Posterior vena cava (tissue), 2 donors: ENCODE measurements at regions of chr16 and their contacts with region 1.

Region 1: DNA sequence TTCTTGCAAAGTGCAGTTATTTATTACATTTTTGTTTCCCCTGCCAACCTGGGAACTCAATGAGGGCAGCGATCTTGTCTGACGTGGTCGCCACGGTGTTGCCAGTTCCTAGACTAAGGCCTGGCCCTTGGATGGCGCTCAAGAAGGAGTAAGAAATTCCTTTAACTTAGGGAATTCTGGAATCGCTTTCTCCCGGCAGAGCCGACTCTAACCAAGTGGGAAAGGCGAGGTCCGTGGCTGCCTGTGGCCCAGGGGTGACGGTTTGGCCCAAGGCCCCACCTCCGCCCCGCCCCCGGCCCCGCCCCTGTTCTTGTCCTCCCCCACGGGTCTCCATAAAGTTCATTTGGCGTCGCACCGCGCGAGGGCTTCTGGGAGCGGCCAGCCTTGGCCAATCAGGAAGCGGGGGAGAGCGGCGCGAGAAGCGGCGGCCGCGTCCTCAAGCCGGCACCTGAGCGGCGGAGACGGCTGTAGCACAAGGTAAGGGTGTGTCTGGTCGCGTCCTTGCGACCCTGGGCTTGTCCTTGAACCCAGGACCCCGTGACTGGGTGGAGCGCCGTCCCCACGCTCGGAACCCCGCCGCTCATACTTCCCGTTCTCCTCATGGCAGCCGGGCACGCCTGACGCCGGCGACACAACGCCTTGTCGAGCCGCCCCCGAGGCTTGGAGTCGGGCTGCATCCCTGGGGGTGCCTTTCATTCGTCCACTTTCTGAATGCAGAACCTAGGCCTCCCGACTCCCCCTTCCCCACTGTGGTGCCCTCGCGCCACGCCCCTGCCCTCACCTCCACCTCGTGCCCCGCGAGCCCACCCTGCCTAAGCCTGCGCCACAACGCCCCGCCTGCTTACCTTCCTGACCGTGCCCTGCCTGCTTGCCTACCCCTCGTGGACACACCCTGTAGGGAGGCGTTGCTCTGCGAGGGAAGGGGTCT is at the start of gene NUP93:
- DNase-seq: peak; percentile 98
- total RNA-seq, gene NUP93: 42.8 to 54.7 TPM

Region 2: DNA sequence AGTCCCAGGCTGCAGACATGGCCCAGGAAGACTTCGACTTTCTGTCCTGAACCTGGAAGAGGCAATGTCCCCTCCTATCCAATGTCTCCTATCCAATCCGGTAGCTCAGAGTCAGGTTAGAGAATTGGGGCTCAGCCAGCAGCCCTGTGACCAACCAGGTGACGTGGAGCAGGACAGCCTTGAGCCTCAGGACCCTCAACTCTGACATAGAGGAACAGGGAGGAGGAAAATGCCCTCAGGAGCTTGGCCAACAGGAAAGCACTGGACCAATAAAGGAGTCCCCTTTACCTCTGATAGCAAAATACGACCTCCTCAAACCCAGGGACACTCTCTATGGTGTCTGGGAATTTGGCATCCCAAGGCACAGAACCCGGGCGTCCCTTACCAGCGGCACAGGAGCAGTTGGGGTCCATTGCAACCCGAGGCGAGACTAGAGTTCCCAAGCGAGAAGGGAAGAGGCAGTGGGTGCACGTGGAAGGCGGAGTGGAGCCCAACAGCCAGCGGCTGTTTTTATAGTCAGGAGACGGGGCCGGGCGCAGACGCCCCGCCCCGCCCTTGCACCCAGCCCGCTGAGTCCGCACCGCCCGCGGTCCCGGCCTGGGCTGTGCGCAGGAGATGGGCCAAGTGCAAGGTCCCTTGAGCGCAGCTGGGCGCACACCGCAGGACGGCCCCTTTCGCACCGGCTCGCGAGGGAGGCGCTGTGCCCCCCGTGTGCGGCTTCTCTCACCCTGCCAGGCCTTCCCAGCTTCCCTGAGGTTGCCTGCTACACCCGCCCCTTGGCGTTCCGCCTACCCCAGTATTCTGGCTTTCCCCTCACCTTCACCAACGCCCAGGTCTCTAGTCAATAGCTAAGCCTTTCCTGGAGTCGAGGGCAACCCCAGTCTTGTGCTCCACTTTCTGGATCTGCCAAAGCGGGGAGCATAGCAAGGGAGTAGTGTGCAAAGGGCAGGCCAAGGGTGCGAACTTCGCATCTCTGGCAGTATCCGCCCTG is 62.1 kb before region 1 on chr16 and contains the start of gene MT1G:
- intact Hi-C with region 1: loop called in 1 of 2 experiments (anchors 10 kb)
- DNase-seq: peak; percentile 92
- total RNA-seq, gene MT1G: 14.0 to 26.7 TPM

Region 3: GRCh38 chr16:56753410-56753809 is 23.4 kb after region 1 on chr16:
- intact Hi-C with region 1: loop called in 1 of 2 experiments (anchors 2 kb)
- DNase-seq: no peak

Region 4: DNA sequence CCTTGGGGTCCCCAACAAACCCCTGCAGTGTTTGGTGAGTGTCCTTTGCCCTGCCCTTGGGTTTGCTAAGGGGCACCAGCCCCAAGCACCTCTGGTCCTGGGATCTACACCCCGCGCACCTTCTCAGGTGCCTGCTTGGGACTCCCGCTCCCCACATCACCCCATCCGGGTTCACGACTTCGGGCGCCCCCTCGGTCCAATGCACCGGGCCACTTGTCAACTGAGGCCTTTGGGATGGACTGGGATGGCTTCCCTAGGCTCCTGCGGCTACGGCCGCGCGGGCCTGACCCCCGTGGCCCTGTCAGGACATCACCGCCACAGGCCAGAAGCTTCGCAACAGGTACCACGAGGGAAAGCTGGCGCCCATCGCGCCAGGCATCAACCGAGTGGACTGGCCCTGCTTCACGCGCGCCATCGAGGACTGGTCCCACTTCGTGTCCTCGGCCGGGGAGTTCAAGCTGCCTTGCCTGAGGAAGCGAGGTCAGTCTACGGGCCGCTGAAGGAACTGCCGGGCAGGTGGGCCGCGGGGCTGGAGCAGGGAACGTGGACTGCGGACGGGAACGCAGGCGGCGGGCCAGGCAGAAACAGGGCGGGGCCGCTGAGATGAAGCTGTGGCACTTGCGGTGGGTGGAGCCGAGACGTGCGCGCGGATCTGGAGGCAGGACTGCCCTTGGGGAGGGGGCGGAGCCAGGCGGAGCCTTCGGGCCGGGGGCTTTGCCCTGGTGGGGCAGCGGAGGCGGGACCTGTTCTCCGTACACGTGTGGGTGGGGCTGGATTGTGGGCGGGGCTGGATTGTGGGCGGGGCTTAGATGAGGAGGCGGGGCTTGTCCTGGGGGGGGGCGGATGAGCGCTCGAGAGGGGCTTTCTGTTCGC is 1254.6 kb after region 1 on chr16:
- intact Hi-C with region 1: no loop called
- DNase-seq: peak; percentile 93